Naive thymus-derived CD4-positive, alpha-beta T cell (primary cell): ENCODE measurements at regions of chr1 and their contacts with region 1.

Region 1: DNA sequence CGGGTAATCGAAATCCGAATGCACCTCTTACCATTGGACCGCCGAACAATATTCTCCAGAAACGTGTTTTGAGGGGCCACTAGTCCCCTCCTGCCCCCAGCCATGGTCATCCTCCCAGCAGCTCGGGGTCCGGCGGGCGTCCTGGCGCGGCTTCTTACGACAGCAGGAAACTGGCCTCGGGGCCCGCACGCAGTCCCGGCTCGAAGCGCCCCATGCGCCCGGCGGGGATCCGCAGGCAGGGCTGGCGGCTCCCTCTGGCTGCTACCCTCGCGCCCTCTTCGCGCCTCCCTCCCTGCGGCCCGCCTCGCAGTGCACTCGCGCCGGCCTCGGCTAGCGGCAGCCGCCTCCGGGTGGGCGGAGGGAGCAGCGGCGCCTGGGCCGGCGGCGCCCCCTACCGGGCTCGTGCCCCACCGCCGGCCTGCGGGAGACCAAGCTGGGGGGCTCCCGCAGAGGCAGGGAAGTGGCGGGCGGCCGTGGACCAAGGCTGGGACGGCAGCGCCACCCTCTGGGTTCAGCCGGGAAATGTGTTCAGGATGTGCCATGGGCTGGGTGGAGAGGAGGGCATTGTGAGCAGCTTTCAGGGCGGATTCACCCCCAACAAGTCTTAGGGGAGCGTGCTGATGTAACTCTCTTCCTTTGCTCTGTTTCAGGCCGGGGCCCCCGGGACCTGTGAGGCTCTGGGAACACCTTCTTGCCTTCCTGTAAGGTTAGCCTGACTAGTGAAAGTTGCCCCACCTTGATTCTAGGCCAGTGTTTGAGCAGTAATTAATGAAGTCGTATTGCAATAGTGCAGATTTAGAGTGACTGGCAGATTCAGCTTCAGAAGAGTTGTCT is at the start of gene KCNH1:
- DNase-seq: peak; percentile 55 to 81 (median 71)
- ATAC-seq: peak; percentile 93
- H3K4me3 ChIP-seq: peak within 1 kb of the TSS; percentile 50
- H3K4me3 Mint-ChIP-seq: peak within 1 kb of the TSS; percentile 65 to 88 (median 78)
- H3K27ac ChIP-seq: no peak within 1 kb of the TSS
- H3K27ac Mint-ChIP-seq: no peak within 1 kb of the TSS
- H3K4me1 ChIP-seq: peaks cover 3 to 5% of the 10 kb centered on the region in 2 donors
- H3K4me1 Mint-ChIP-seq: peaks cover 0 to 10% (median 7%) of the 10 kb centered on the region in 7 donors
- H3K27me3 ChIP-seq: peaks cover 0 to 6% of the 10 kb centered on the region in 2 donors
- H3K27me3 Mint-ChIP-seq: peaks cover 19 to 89% (median 64%) of the 10 kb centered on the region in 5 donors
- total RNA-seq, gene KCNH1: not detected

Region 2: GRCh38 chr1:209860293-209860881 is 1273.7 kb before region 1 on chr1:
- CTCF ChIA-PET with region 1: no interaction called
- POLR2A ChIA-PET with region 1: no interaction called
- intact Hi-C with region 1: loop called in 1 of 2 experiments (anchors 10 kb)
- DNase-seq: peak; percentile 32 to 68 (median 58)
- ATAC-seq: peak; percentile 88
- H3K4me3 ChIP-seq: no peak overlapping the region
- H3K4me3 Mint-ChIP-seq: no peak overlapping the region
- H3K27ac ChIP-seq: no peak overlapping the region
- H3K27ac Mint-ChIP-seq: no peak overlapping the region
- H3K4me1 ChIP-seq: no peaks in the 10 kb centered on the region
- H3K4me1 Mint-ChIP-seq: peaks cover 0 to 5% (median 0%) of the 10 kb centered on the region in 7 donors
- H3K27me3 ChIP-seq: no peaks in the 10 kb centered on the region
- H3K27me3 Mint-ChIP-seq: peaks cover 0 to 25% (median 15%) of the 10 kb centered on the region in 5 donors

Region 3: DNA sequence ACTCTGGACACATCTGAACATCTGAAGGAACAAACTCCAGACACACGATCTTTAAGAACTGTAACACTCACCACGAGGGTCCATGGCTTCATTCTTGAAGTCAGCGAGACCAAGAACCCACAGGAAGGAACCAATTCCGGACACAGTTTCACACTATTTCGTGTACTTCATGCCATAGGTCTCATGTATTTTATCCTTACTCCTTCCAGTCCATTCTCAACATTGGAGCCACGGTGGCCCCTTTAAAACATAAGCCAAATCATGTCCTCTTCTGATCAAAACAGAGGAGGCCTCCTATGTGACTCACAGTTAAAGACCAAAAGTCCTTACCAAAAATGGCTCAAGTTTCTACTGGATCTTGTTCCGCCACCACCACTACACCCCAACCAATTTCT is 95.3 kb after region 1 on chr1:
- CTCF ChIA-PET with region 1: no interaction called
- POLR2A ChIA-PET with region 1: no interaction called
- intact Hi-C with region 1: loop called in 1 of 2 experiments (anchors 10 kb)
- DNase-seq: no peak
- ATAC-seq: peak; percentile 54
- H3K4me3 ChIP-seq: no peak overlapping the region
- H3K4me3 Mint-ChIP-seq: peak overlapping the region; percentile 43 to 82 (median 74)
- H3K27ac ChIP-seq: peak overlapping the region; percentile 38
- H3K27ac Mint-ChIP-seq: peak overlapping the region; percentile 67 to 90 (median 82)
- H3K4me1 ChIP-seq: peaks cover 13 to 17% of the 10 kb centered on the region in 2 donors
- H3K4me1 Mint-ChIP-seq: peaks cover 15 to 41% (median 30%) of the 10 kb centered on the region in 7 donors
- H3K27me3 ChIP-seq: no peaks in the 10 kb centered on the region
- H3K27me3 Mint-ChIP-seq: peaks cover 0 to 8% (median 0%) of the 10 kb centered on the region in 5 donors

Region 4: DNA sequence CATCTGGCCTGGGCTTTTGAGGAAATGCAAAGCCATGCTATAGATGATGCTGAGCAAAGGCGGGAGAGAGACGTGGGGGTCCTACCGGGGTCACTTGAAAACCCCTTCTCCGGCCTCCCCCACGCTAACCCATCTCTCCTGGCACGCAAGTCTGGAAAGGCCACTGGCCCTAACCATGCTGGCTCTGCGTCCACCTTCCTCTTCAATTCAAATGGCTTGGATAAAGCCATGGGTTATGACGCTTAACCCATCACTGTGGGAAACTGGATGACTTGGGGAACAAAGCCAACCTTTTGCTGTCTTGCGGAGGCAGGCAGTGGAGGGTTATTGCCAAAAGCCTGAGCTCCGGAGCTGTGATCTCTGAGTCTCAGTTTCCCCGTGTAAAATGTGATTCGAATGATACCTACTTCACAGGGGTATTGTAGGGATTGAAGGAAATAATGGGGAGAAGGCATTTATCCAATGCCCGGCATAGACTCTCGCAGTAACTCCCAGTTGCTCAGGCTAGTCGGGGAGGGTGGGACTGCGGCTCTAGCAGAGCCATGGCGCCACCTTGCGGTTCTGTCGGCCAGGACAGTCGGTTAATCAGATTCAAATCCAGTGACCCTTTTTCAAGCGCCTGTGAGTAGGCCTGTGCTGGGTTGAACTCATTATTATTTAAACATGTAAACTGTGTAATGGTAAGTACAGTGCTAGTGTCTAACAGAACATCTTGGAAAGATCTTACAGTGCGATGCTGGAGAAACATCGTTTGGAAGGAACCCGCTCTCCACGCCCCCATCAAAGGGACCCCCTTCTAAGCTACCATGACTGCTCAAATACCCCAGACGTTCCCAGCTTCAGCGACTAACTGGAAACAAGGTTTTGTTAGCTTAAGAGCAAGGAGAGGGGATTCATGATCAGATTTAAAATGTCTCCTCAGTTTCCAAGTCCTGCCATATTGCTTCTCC is 521.1 kb after region 1 on chr1:
- CTCF ChIA-PET with region 1: no interaction called
- POLR2A ChIA-PET with region 1: no interaction called
- intact Hi-C with region 1: loop called in 1 of 2 experiments (anchors 1 kb)
- DNase-seq: peak; percentile 60 to 82 (median 71)
- ATAC-seq: peak; percentile 95
- H3K4me3 ChIP-seq: no peak overlapping the region
- H3K4me3 Mint-ChIP-seq: no peak overlapping the region
- H3K27ac ChIP-seq: no peak overlapping the region
- H3K27ac Mint-ChIP-seq: no peak overlapping the region
- H3K4me1 ChIP-seq: no peaks in the 10 kb centered on the region
- H3K4me1 Mint-ChIP-seq: peaks cover 0 to 5% (median 0%) of the 10 kb centered on the region in 7 donors
- H3K27me3 ChIP-seq: no peaks in the 10 kb centered on the region
- H3K27me3 Mint-ChIP-seq: peaks cover 0 to 13% (median 0%) of the 10 kb centered on the region in 5 donors